ENCODE measurements at regions of chr19 and their contacts with region 1.

Region 1: GRCh38 chr19:4803736-4804695 is 12.5 kb downstream of the FEM1A start:
- DNase-seq: no peak
- H3K4me3 ChIP-seq: no peak overlapping the region
- H3K27ac ChIP-seq: peak overlapping the region; percentile 86
- H3K4me1 ChIP-seq: peaks cover 38% of the 10 kb centered on the region
- H3K27me3 ChIP-seq: no peaks in the 10 kb centered on the region
- CTCF ChIP-seq: peak; percentile 81

Region 2: DNA sequence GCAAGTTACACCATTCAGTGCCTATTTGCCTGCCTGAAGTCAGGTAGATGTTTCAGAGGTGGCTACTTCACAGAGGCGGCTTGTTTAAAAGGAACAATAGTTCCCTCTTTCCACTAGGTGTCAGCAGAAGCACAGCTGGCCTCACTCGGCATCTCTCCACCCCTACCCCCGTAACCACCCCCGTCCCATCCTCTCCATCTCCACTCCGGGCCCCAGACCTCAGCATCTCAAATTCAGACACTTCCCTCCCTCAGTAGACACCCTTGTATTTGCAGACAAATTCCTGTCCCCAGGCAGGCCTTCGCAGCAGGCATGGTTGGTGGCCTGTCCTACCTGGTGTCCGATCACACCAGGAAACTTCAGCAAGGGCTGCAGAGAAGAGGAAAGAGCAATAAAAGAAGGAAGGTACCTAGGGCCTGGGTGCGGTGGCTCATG is 71.3 kb before region 1 on chr19:
- intact Hi-C with region 1: loop called (anchors 5 kb)
- DNase-seq: peak; percentile 29
- H3K4me3 ChIP-seq: no peak overlapping the region
- H3K27ac ChIP-seq: no peak overlapping the region
- H3K4me1 ChIP-seq: no peaks in the 10 kb centered on the region
- H3K27me3 ChIP-seq: peaks cover 13% of the 10 kb centered on the region
- CTCF ChIP-seq: peak; percentile 81

Region 3: DNA sequence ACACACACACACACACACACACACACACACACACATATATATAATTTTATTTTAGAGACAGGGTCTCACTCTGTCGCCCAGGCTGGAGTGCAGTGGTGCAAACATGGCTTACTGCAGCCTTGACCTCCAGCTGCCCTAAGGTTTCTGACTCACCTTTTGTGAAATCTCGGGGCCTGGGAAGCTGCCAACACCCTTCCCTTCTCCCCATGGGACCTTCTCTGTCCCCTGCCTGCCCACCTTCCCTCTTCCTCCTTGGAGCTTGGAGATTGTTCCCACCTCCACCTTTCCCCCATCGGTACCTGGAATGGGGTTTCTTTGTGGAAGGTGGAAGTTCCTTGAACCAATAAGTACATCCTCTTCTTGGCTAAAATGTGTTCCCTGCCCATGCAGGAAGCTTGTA is 92.4 kb after region 1 on chr19:
- intact Hi-C with region 1: no loop called
- DNase-seq: no peak
- H3K4me3 ChIP-seq: no peak overlapping the region
- H3K27ac ChIP-seq: no peak overlapping the region
- H3K4me1 ChIP-seq: peaks cover 10% of the 10 kb centered on the region
- H3K27me3 ChIP-seq: peaks cover 3% of the 10 kb centered on the region
- CTCF ChIP-seq: no peak

Region 4: GRCh38 chr19:4909897-4910593 is 106.0 kb after region 1 on chr19:
- intact Hi-C with region 1: loop called (anchors 5 kb)
- DNase-seq: peak; percentile 94
- H3K4me3 ChIP-seq: peak overlapping the region; percentile 79
- H3K27ac ChIP-seq: no peak overlapping the region
- H3K4me1 ChIP-seq: peaks cover 29% of the 10 kb centered on the region
- H3K27me3 ChIP-seq: peaks cover 12% of the 10 kb centered on the region
- CTCF ChIP-seq: no peak

Region 5: DNA sequence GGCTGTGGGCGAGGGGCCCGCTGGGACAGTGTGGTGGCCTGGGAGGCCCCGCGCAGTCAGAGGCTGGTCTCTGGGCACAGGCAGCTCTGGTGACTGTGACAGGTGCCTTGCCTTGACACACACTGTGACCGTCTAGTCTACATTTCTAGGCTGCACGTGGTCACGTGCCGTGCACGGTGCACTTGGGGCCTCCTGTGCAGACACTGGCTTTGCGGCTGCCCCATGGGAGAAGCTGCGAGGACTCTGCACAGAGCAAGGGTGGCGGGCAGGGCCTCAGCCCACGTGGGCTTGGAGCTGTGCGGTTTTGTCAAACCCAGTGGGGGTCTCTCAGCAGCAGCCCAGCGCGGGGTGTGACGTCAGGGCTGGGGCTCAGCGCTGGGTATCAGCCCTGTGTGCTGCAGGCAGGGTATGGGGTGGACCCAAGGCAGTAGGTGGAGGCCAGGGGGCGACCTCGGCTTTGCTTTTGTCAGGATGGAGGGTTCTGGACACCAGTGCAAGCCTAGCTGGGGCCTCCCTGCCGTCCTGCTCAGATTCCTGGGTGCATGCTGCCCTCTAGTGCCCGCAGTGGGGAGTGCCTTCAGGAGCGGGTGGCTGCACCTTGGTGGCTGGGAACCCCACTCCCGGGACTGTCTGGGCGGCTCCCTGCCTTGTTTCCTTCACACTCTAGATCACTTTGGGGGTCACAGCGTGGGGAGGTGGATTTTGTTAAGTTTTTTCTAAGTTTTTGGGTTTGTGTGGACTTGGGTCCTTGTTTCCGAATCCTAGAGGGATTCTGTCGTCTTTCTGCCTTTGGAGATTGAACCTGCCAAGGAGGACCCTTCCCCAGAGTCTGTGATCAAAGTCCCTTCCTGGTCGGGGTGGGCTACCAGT is 227.4 kb after region 1 on chr19:
- intact Hi-C with region 1: no loop called
- DNase-seq: peak; percentile 84
- H3K4me3 ChIP-seq: no peak overlapping the region
- H3K27ac ChIP-seq: peak overlapping the region; percentile 78
- H3K4me1 ChIP-seq: peaks cover 75% of the 10 kb centered on the region
- H3K27me3 ChIP-seq: no peaks in the 10 kb centered on the region
- CTCF ChIP-seq: peak; percentile 96

Measured in left ventricle myocardium inferior (tissue), 1 donor.